Activated CD4-positive, alpha-beta T cell treated with anti-CD3 and anti-CD28 coated beads, Interleukin-2, amount 10 ng/mL, durations not matched to agents 24 days and 14 days (primary cell): ENCODE measurements at regions of chr3 and their contacts with region 1.

Region 1: GRCh38 chr3:27134165-27134796 is 234.9 kb downstream of the NEK10 start:
- DNase-seq: peak; percentile 86
- H3K4me3 Mint-ChIP-seq: no peak overlapping the region
- H3K27ac Mint-ChIP-seq: no peak overlapping the region
- H3K4me1 Mint-ChIP-seq: no peaks in the 10 kb centered on the region
- H3K27me3 Mint-ChIP-seq: no peaks in the 10 kb centered on the region

Region 2: GRCh38 chr3:27253831-27254230 is 119.5 kb after region 1 on chr3:
- intact Hi-C with region 1: loop called (anchors 10 kb)
- DNase-seq: peak; percentile 69
- H3K4me3 Mint-ChIP-seq: no peak overlapping the region
- H3K27ac Mint-ChIP-seq: no peak overlapping the region
- H3K4me1 Mint-ChIP-seq: no peaks in the 10 kb centered on the region
- H3K27me3 Mint-ChIP-seq: no peaks in the 10 kb centered on the region

Region 3: DNA sequence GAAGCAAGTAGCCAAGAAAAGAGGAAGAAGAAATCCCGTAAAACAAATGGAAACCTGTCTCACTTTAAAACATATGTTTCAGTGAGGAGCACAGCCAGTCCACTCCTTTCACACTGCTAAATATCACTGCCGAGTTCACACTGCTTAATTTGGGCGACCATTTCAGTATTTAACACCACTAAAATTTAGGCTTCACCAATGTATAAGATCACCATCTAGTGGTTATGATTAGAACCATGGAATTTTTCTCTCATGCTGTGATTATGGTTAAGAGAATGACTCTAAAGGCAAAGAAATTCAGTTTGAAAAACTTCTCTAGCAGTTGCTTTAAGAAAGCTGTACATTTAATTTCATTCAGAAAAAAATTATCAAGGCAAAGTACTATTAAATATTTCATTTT is 333.3 kb after region 1 on chr3:
- intact Hi-C with region 1: loop called (anchors 2 kb)
- DNase-seq: peak; percentile 60
- H3K4me3 Mint-ChIP-seq: no peak overlapping the region
- H3K27ac Mint-ChIP-seq: no peak overlapping the region
- H3K4me1 Mint-ChIP-seq: peaks cover 6% of the 10 kb centered on the region
- H3K27me3 Mint-ChIP-seq: no peaks in the 10 kb centered on the region

Region 4: DNA sequence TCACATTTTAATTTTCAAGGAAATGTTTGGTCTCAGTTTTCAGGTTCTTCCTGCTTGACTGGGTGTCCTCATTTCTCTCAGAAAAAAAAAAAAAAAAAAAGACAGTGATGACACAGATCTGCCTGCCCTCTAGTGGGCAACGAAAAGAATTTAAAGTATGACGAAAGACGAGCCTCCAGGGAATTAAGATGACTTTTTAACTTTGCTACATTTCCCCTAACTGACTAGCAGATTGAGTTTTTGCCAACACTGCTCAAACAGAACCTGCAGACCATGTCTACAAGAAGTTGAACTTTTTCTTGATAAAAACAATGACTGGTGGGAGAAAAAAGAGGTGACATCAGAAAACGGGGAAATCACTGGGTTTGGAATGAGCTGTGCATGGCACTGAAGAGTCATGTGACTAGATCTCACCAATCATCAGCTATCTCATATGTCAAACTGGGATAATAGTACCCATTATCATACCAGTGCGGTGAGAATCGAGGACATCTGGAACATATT is 547.0 kb after region 1 on chr3:
- intact Hi-C with region 1: loop called (anchors 1 kb)
- DNase-seq: peak; percentile 80
- H3K4me3 Mint-ChIP-seq: peak overlapping the region; percentile 68
- H3K27ac Mint-ChIP-seq: peak overlapping the region; percentile 74
- H3K4me1 Mint-ChIP-seq: peaks cover 7% of the 10 kb centered on the region
- H3K27me3 Mint-ChIP-seq: peaks cover 11% of the 10 kb centered on the region